OCI-LY7 (cell line): ENCODE measurements at regions of chr3 and their contacts with region 1.

Region 1: GRCh38 chr3:99753268-99753975 is 64.2 kb upstream of the CMSS1 start:
- DNase-seq: peak; percentile 48
- H3K4me3 ChIP-seq: no peak overlapping the region
- H3K27ac ChIP-seq: no peak overlapping the region
- H3K4me1 ChIP-seq: no peaks in the 10 kb centered on the region
- CTCF ChIP-seq: peak; percentile 85

Region 2: DNA sequence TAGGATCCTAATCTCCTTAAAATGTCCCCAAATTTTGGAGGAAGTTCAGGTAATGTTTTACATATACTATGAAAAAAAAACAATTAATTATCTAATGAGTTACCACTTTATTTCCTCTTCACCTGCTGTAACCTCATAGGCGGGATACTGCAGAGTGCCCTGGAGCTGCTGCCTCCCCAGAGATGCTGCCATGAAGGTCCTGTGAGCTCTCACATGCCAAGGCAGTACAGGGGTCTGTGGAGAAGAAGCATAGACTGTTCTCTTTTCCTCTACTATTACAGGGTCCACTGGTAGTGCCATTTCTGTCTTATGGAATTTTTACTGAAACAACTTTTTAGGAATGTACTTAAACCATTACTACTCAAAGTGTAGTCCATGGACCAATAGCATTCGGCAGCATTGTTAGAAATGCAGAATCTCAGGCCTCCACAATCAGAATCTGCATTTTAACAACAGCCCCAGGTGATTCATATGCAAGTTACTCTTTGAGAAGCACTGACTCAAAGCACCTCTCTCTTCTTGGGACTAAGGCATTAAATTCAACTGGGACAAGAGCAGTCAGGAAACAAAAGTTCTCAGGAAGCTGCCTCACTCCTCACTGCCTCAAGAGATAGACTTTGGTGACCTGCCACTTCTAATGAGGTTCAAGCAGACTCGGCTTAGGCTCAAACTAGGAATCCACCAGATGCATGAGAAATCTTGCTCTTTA is 1129.7 kb before region 1 on chr3:
- CTCF ChIA-PET with region 1: no interaction called
- POLR2A ChIA-PET with region 1: no interaction called
- intact Hi-C with region 1: loop called (anchors 10 kb)
- DNase-seq: no peak
- H3K4me3 ChIP-seq: no peak overlapping the region
- H3K27ac ChIP-seq: no peak overlapping the region
- H3K4me1 ChIP-seq: no peaks in the 10 kb centered on the region
- CTCF ChIP-seq: no peak

Region 3: DNA sequence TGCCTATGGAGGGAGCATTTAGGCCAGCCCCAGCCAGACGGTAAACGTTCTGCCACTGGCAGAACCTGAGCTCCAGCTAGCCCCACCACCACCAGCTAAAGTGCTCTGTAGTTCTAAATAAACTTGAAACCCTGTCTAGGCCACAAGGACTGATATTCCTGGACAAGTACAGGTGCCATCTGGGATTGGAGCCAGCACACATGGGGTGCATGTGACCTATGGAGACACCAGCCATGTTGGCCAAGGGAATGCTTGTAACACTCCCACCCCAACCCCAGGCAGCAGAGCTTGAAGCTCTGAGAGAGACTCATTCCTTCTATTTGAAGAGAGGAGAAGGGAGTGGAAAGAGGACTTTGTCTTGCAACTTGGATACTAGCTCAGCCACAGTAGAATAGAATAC is 567.4 kb before region 1 on chr3:
- CTCF ChIA-PET with region 1: no interaction called
- POLR2A ChIA-PET with region 1: no interaction called
- intact Hi-C with region 1: no loop called
- DNase-seq: no peak
- H3K4me3 ChIP-seq: no peak overlapping the region
- H3K27ac ChIP-seq: no peak overlapping the region
- H3K4me1 ChIP-seq: no peaks in the 10 kb centered on the region
- CTCF ChIP-seq: no peak

Region 4: DNA sequence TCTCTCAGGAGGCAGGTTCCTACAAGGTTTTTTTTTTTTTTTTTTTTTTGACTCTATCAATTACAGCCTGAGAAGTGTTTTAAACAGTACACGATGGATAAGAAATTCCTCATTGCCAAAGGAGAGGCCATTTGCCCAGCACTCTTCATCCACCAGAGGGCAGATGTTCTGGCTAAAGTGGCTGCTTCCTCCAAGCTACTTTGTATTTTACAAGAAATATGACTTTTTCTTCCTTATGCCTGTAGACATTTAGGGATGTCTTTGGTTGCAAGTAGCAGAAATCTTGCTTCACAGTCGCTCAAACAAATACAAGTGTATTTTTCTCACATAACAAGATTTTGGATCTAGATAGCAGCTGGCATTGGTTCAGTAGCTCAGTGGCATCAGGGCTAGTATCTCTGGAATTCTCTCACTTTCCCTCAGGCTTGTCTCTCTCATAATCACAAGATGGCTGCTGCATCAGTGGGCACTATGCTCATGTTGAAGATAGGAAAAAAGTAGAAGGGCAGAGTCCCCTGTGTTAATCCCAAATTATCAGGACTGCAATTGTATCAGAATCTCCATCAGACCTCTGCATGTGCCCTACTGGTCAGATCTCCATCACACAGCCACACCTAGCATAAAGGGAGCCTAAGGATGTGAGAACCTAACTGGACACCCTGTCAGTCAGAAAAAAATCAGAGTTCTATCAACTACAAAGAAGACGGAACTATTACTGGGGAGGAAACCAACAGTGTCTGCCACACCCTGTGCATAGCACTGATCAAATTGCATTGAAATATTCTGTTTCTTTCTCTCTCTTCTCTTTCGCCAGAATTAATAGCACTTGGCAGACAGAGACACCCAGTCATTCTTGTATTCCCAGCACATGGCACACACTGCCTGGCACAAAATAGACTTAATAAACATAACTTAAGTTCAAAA is 253.9 kb before region 1 on chr3:
- CTCF ChIA-PET with region 1: no interaction called
- POLR2A ChIA-PET with region 1: interaction called, 3 read pairs
- intact Hi-C with region 1: loop called (anchors 10 kb)
- DNase-seq: peak; percentile 15
- H3K4me3 ChIP-seq: no peak overlapping the region
- H3K27ac ChIP-seq: no peak overlapping the region
- H3K4me1 ChIP-seq: no peaks in the 10 kb centered on the region
- CTCF ChIP-seq: peak; percentile 77

Region 5: DNA sequence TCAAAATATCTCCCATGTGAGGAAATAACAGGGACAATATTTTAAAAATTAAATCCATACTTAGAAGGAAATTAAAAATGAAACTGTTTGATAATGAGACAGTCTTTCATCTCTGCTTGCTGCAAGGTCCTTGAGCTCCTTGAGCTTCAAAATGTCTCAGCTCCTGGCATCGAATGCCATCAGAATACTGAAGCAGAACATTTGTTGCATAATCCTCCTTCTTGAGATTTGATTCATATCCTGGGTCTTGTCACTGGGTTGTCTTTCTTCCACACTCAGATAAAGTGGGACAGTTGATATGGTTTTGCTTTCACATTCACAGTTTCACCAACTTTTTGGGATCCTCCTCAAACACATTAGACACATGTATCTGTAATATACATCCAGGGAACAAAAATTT is 87.2 kb before region 1 on chr3:
- CTCF ChIA-PET with region 1: no interaction called
- POLR2A ChIA-PET with region 1: no interaction called
- intact Hi-C with region 1: loop called (anchors 5 kb)
- DNase-seq: no peak
- H3K4me3 ChIP-seq: no peak overlapping the region
- H3K27ac ChIP-seq: no peak overlapping the region
- H3K4me1 ChIP-seq: no peaks in the 10 kb centered on the region
- CTCF ChIP-seq: no peak

Region 6: DNA sequence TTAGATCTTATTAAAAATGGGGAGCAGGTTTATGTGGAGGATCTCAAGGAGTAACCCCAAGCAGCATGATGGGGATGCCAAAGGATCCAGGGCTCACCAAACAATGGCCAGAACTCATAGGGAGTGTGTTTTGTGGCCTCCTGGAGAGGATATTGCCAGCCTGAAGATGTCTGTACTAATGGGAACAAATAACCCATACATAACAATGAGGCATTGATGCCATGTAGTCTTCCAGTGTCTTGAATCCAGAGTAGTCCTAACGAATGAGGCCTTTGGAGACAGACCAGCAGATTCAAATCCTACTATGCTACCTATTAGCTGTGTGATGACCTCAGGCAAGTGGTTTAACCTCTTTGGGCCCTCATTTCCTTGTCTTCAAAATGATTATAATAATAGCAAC is 19.2 kb after region 1 on chr3:
- CTCF ChIA-PET with region 1: no interaction called
- POLR2A ChIA-PET with region 1: no interaction called
- intact Hi-C with region 1: no loop called
- DNase-seq: no peak
- H3K4me3 ChIP-seq: no peak overlapping the region
- H3K27ac ChIP-seq: no peak overlapping the region
- H3K4me1 ChIP-seq: no peaks in the 10 kb centered on the region
- CTCF ChIP-seq: no peak